ENCODE measurements at regions of chr16 and their contacts with region 1.

Region 1: GRCh38 chr16:83913245-83913633 is 14.3 kb downstream of the MLYCD start:
- DNase-seq: no peak
- H3K4me3 Mint-ChIP-seq: no peak overlapping the region
- H3K27ac Mint-ChIP-seq: no peak overlapping the region
- H3K4me1 Mint-ChIP-seq: no peaks in the 10 kb centered on the region
- H3K27me3 Mint-ChIP-seq: no peaks in the 10 kb centered on the region
- CTCF ChIP-seq: no peak

Region 2: GRCh38 chr16:83701494-83701893 is 211.7 kb before region 1 on chr16:
- CTCF ChIA-PET with region 1: no interaction called
- POLR2A ChIA-PET with region 1: no interaction called
- intact Hi-C with region 1: no loop called
- DNase-seq: peak; percentile 48
- H3K4me3 Mint-ChIP-seq: no peak overlapping the region
- H3K27ac Mint-ChIP-seq: no peak overlapping the region
- H3K4me1 Mint-ChIP-seq: no peaks in the 10 kb centered on the region
- H3K27me3 Mint-ChIP-seq: no peaks in the 10 kb centered on the region
- CTCF ChIP-seq: no peak

Region 3: GRCh38 chr16:83870830-83871229 is 42.4 kb before region 1 on chr16:
- CTCF ChIA-PET with region 1: no interaction called
- POLR2A ChIA-PET with region 1: no interaction called
- intact Hi-C with region 1: no loop called
- DNase-seq: no peak
- H3K4me3 Mint-ChIP-seq: no peak overlapping the region
- H3K27ac Mint-ChIP-seq: no peak overlapping the region
- H3K4me1 Mint-ChIP-seq: no peaks in the 10 kb centered on the region
- H3K27me3 Mint-ChIP-seq: peaks cover 85% of the 10 kb centered on the region
- CTCF ChIP-seq: no peak

Region 4: GRCh38 chr16:83926726-83927397 is 13.6 kb after region 1 on chr16:
- CTCF ChIA-PET with region 1: interaction called, 29 read pairs
- POLR2A ChIA-PET with region 1: interaction called, 3 read pairs
- intact Hi-C with region 1: no loop called
- DNase-seq: peak; percentile 86
- H3K4me3 Mint-ChIP-seq: peak overlapping the region; percentile 62
- H3K27ac Mint-ChIP-seq: no peak overlapping the region
- H3K4me1 Mint-ChIP-seq: peaks cover 5% of the 10 kb centered on the region
- H3K27me3 Mint-ChIP-seq: no peaks in the 10 kb centered on the region
- CTCF ChIP-seq: peak; percentile 86

Measured in MCF 10A (cell line).